Activated T-helper 2 cell treated with anti-CD3 and anti-CD28 coated beads, Interferon-gamma antibody, Interleukin-2, Interleukin-4, amounts not matched to agents 10 μg/mL and 5 μg/mL and 100 μg/mL, durations not matched to agents 14 hours and 24 hours and 36 hours (primary cell): ENCODE measurements at regions of chr16 and their contacts with region 1.

Region 1: GRCh38 chr16:1782352-1783091 is at the starts of genes NUBP2 and SPSB3:
- DNase-seq: peak; percentile 99
- H3K4me3 Mint-ChIP-seq: peak within 1 kb of the TSS; percentile 90
- H3K27ac Mint-ChIP-seq: peak within 1 kb of the TSS; percentile 83
- H3K4me1 Mint-ChIP-seq: peaks cover 11% of the 10 kb centered on the region
- H3K27me3 Mint-ChIP-seq: no peaks in the 10 kb centered on the region
- total RNA-seq, gene NUBP2: 64.5 and 66.7 TPM in 2 replicates
- total RNA-seq, gene SPSB3: 27.1 and 28.3 TPM in 2 replicates

Region 2: DNA sequence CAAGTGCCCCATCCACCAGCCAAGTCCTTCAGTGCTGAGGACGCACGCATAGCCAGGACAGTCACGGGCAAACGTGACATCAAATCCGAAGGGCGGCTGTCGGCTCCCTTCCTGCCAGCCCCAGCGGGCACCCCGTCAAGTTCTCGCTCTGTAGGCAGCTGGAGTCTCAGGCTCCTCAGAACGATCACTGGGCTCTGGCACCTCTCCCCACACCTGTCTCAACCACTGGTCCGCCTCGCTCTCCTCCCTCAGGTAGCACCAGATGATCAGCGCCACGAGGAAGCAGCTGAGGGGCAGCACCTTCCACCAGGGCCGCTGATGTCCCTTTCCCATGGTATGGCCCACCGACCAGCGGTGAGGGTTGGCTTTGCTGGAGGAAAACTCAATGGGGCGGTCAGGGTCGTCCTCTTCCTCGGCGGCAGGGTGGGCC is 362.4 kb before region 1 on chr16:
- intact Hi-C with region 1: loop called (anchors 1 kb)
- DNase-seq: peak; percentile 16
- H3K4me3 Mint-ChIP-seq: peak overlapping the region; percentile 87
- H3K27ac Mint-ChIP-seq: peak overlapping the region; percentile 98
- H3K4me1 Mint-ChIP-seq: peaks cover 4% of the 10 kb centered on the region
- H3K27me3 Mint-ChIP-seq: no peaks in the 10 kb centered on the region

Region 3: GRCh38 chr16:1705688-1706385 is 76.7 kb before region 1 on chr16 and contains the start of gene MAPK8IP3:
- intact Hi-C with region 1: loop called (anchors 5 kb)
- DNase-seq: peak; percentile 94
- H3K4me3 Mint-ChIP-seq: peak within 1 kb of the TSS; percentile 96
- H3K27ac Mint-ChIP-seq: peak within 1 kb of the TSS; percentile 98
- H3K4me1 Mint-ChIP-seq: peaks cover 17% of the 10 kb centered on the region
- H3K27me3 Mint-ChIP-seq: no peaks in the 10 kb centered on the region
- total RNA-seq, gene MAPK8IP3: 74.8 and 77.5 TPM in 2 replicates

Region 4: DNA sequence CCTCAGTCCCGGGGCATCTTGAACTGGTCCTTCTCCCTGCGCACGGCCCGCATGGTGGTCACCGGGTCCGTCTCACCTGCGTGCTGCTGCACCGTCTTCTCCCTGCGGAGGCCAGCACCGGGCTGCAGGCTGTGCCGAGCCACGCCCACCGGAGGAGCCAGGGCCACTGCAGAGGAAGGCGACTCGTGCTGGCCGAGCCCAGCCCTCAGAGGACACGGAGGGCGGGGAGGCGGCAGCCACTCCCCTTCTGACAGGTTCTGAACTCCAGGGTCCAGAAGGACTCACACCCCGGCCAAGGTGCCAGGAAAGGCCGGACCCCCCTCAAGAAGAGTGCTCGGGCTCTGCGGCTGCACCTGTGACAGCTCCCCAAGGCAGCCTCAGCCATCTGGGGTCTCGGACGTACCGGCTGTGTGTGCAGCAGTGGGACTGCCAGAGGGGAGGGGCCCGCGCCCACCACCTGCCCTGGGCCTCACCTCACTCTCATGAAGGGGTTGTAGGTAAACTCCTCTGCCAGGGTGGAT is 26.8 kb after region 1 on chr16:
- intact Hi-C with region 1: no loop called
- DNase-seq: no peak
- H3K4me3 Mint-ChIP-seq: no peak overlapping the region
- H3K27ac Mint-ChIP-seq: no peak overlapping the region
- H3K4me1 Mint-ChIP-seq: peaks cover 2% of the 10 kb centered on the region
- H3K27me3 Mint-ChIP-seq: no peaks in the 10 kb centered on the region

Region 5: GRCh38 chr16:1826691-1827575 is 44.4 kb after region 1 on chr16 and contains the starts of genes FAHD1 and HAGH:
- intact Hi-C with region 1: loop called (anchors 2 kb)
- DNase-seq: peak; percentile 92
- H3K4me3 Mint-ChIP-seq: peak within 1 kb of the TSS; percentile 93
- H3K27ac Mint-ChIP-seq: peak within 1 kb of the TSS; percentile 85
- H3K4me1 Mint-ChIP-seq: peaks cover 24% of the 10 kb centered on the region
- H3K27me3 Mint-ChIP-seq: no peaks in the 10 kb centered on the region
- total RNA-seq, gene FAHD1: 17.6 and 20.8 TPM in 2 replicates
- total RNA-seq, gene HAGH: 60.3 and 67.6 TPM in 2 replicates

Region 6: GRCh38 chr16:1959269-1960049 is 176.9 kb after region 1 on chr16 and contains the start of gene NDUFB10:
- intact Hi-C with region 1: loop called (anchors 1 kb)
- DNase-seq: peak; percentile 91
- H3K4me3 Mint-ChIP-seq: peak within 1 kb of the TSS; percentile 95
- H3K27ac Mint-ChIP-seq: peak within 1 kb of the TSS; percentile 89
- H3K4me1 Mint-ChIP-seq: peaks cover 26% of the 10 kb centered on the region
- H3K27me3 Mint-ChIP-seq: no peaks in the 10 kb centered on the region
- total RNA-seq, gene NDUFB10: 132 TPM in 2 replicates

Region 7: GRCh38 chr16:1964506-1965395 is 182.2 kb after region 1 on chr16 and contains the start of gene RPS2:
- intact Hi-C with region 1: loop called (anchors 1 kb)
- DNase-seq: peak; percentile 99
- H3K4me3 Mint-ChIP-seq: peak within 1 kb of the TSS; percentile 98
- H3K27ac Mint-ChIP-seq: peak within 1 kb of the TSS; percentile 94
- H3K4me1 Mint-ChIP-seq: peaks cover 30% of the 10 kb centered on the region
- H3K27me3 Mint-ChIP-seq: no peaks in the 10 kb centered on the region
- total RNA-seq, gene RPS2: 3,560 and 3,687 TPM in 2 replicates